ENCODE measurements at regions of chr11 and their contacts with region 1.

Region 1: GRCh38 chr11:65700391-65700790 is 11.7 kb upstream of the KAT5 start:
- DNase-seq: no peak
- ATAC-seq: peak; percentile 89
- H3K4me3 ChIP-seq: no peak overlapping the region
- H3K27ac ChIP-seq: no peak overlapping the region
- H3K4me1 ChIP-seq: no peaks in the 10 kb centered on the region
- H3K27me3 ChIP-seq: no peaks in the 10 kb centered on the region
- CTCF ChIP-seq: no peak; a peak in 1 of 6 replicates
- EP300 ChIP-seq: no peak
- POLR2A ChIP-seq: no peak
- RAD21 ChIP-seq: no peak

Region 2: GRCh38 chr11:65625628-65626342 is 74.6 kb before region 1 on chr11:
- CTCF ChIA-PET with region 1: interaction called, 26 read pairs
- POLR2A ChIA-PET with region 1: no interaction called
- RAD21 ChIA-PET with region 1: interaction called, 15 read pairs
- SMC1A ChIA-PET with region 1: interaction called, 8 read pairs
- in situ Hi-C with region 1: no loop called
- intact Hi-C with region 1: loop called (anchors 5 kb)
- DNase-seq: no peak
- ATAC-seq: peak; percentile 96
- H3K4me3 ChIP-seq: no peak overlapping the region
- H3K27ac ChIP-seq: no peak overlapping the region
- H3K4me1 ChIP-seq: no peaks in the 10 kb centered on the region
- H3K27me3 ChIP-seq: no peaks in the 10 kb centered on the region
- CTCF ChIP-seq: peak; percentile 60 to 87 (median 85)
- EP300 ChIP-seq: no peak
- POLR2A ChIP-seq: no peak
- RAD21 ChIP-seq: peak; percentile 39

Measured in GM12878 (cell line).